Heart left ventricle (tissue), 16 donors: ENCODE measurements at regions of chr13 and their contacts with region 1.

Region 1: DNA sequence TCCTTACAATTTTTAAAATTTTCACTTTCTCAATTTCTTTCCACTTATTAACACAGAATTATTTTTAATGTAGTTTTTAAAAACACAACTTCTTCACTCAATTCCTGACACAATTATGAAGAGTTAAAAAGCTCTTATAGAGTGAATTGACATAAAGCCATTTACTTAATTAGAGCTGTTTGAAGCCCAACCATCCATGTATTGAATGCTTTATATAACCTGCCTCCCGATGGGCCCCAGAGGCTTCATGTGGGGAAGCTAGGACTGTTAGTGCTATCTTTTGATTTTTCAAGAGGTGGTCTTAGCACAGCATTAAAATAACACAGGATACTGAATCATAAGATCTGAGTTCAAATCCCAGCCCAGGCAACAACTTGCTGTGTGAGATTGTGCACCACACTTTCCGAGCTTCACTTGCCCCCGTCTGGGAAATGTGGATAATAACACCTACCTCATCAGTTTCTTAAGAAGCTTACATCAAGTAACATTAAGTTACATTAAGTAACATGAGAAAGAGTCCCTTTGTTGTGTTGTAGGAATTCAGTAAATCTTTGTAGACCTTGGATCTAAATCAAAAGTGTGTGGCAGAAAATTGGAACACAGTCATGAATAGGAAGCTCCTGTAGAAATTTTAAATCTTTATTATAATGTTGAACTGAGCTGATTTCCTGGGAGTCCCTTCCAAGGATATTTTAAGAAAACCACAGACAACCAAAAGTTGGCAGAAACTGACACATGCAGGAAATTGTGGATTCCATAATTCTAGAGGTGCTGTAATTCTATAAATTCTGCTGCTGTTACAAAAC is 5.5 kb upstream of the ENOX1 start:
- DNase-seq: no peak
- ATAC-seq: no peak
- H3K4me3 ChIP-seq: no peak overlapping the region
- H3K27ac ChIP-seq: no peak overlapping the region
- H3K4me1 ChIP-seq: peaks cover 0 to 9% (median 3%) of the 10 kb centered on the region in 12 donors
- H3K27me3 ChIP-seq: peaks cover 0 to 26% (median 0%) of the 10 kb centered on the region in 9 donors
- CTCF ChIP-seq: no peak
- POLR2A ChIP-seq: no peak

Region 2: GRCh38 chr13:43303033-43303729 is 489.1 kb before region 1 on chr13:
- intact Hi-C with region 1: loop called in 6 of 10 experiments (anchors 2 to 10 kb)
- DNase-seq: peak; percentile 55 to 78 (median 68)
- ATAC-seq: peak; percentile 71 to 91 (median 90)
- H3K4me3 ChIP-seq: no peak overlapping the region
- H3K27ac ChIP-seq: peak overlapping the region in 7 of 12 donors; percentile 16 to 54 (median 35)
- H3K4me1 ChIP-seq: peaks cover 0 to 25% (median 9%) of the 10 kb centered on the region in 12 donors
- H3K27me3 ChIP-seq: no peaks in the 10 kb centered on the region
- CTCF ChIP-seq: peak; percentile 36 to 70 (median 54)
- POLR2A ChIP-seq: no peak

Region 3: DNA sequence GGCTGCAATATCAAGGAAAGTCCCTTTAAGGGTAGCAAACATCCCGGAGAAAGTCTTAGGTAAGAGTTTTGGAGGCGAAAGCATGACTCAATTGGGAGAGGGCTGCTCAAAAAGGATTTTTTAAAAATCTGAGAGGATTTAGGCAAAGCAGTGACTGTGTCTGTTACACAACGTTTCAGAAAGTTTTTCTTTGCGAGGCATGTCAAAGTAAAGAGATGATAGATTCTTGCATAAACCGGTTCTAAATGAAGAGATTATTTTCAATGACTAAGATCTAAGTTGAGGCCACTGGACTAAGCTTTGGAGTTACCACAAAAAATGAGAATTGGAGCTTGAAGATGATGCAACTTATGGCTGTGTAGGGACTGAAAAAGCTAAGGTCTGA is 38.2 kb after region 1 on chr13:
- intact Hi-C with region 1: no loop called
- DNase-seq: no peak
- ATAC-seq: no peak
- H3K4me3 ChIP-seq: no peak overlapping the region
- H3K27ac ChIP-seq: no peak overlapping the region
- H3K4me1 ChIP-seq: peaks cover 0 to 4% (median 0%) of the 10 kb centered on the region in 12 donors
- H3K27me3 ChIP-seq: no peaks in the 10 kb centered on the region
- CTCF ChIP-seq: no peak
- POLR2A ChIP-seq: no peak